CD8-positive, alpha-beta T cell (primary cell): ENCODE measurements at regions of chr18 and their contacts with region 1.

Region 1: DNA sequence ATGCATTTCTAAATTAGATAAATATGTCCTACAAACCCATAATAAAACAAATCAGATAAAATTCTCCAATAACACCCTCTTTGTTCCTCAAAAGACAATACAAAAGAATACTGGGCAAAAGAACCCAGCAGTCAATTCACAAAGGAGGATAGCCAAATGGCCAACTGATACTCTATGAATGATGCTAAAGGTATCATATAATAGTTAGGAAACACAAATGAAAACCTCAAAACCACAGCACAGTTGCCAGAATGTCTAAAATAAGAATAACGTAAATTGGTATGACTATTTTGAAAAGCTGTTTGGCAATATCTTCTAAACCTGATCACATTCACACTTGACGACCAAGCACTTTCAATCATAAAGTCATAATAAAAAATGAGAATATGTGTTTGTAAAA is 315.4 kb downstream of the CDH7 start:
- DNase-seq: no peak
- ATAC-seq: no peak
- H3K4me3 ChIP-seq: no peak overlapping the region
- H3K4me3 Mint-ChIP-seq: no peak overlapping the region
- H3K27ac ChIP-seq: no peak overlapping the region
- H3K27ac Mint-ChIP-seq: no peak overlapping the region
- H3K4me1 ChIP-seq: no peaks in the 10 kb centered on the region
- H3K4me1 Mint-ChIP-seq: no peaks in the 10 kb centered on the region
- H3K27me3 ChIP-seq: no peaks in the 10 kb centered on the region
- H3K27me3 Mint-ChIP-seq: no peaks in the 10 kb centered on the region
- CTCF ChIP-seq: no peak

Region 2: DNA sequence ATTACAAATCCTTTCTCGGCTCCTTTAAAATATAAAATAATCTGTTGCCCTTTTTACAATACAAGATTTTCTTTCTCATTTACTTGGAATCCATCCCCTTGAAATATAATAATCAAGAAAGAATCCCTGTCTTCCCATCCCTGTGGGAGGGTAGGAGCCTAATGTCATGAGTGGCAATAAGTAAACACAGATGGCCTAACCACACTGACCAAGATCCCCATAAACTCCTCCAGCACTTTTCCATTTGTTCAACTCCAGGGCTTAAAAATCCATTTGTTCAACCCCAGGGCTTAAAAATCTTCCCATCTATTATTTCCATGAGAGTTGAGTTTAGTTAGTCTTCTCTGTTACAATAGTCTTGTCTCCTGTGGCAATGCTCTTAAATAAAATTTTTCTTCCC is 17.8 kb before region 1 on chr18:
- CTCF ChIA-PET with region 1: no interaction called
- POLR2A ChIA-PET with region 1: no interaction called
- intact Hi-C with region 1: loop called in 1 of 2 experiments (anchors 2 kb)
- DNase-seq: no peak
- ATAC-seq: no peak
- H3K4me3 ChIP-seq: no peak overlapping the region
- H3K4me3 Mint-ChIP-seq: no peak overlapping the region
- H3K27ac ChIP-seq: no peak overlapping the region
- H3K27ac Mint-ChIP-seq: no peak overlapping the region
- H3K4me1 ChIP-seq: no peaks in the 10 kb centered on the region
- H3K4me1 Mint-ChIP-seq: no peaks in the 10 kb centered on the region
- H3K27me3 ChIP-seq: no peaks in the 10 kb centered on the region
- H3K27me3 Mint-ChIP-seq: no peaks in the 10 kb centered on the region
- CTCF ChIP-seq: no peak

Region 3: DNA sequence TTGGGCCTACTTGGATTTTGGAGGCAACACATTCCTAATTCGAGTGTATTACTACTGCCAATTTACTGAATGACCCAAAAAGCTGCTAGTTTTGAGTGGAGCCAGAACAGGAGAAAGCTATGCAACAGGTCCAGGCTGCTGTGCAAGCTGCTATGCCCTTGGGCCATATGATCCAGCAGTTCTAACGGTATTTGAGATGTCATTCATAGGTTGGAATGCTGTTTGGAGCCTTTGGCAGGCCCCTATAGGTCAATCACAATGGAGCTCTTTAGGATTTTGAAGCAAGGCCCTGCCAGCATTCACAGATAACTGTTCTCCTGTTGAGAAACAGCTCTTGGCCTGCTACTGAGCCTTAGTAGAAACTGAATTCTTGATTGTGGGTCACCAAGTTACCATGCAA is 169.0 kb after region 1 on chr18:
- CTCF ChIA-PET with region 1: no interaction called
- POLR2A ChIA-PET with region 1: no interaction called
- intact Hi-C with region 1: no loop called
- DNase-seq: no peak
- ATAC-seq: no peak
- H3K4me3 ChIP-seq: no peak overlapping the region
- H3K4me3 Mint-ChIP-seq: no peak overlapping the region
- H3K27ac ChIP-seq: no peak overlapping the region
- H3K27ac Mint-ChIP-seq: no peak overlapping the region
- H3K4me1 ChIP-seq: no peaks in the 10 kb centered on the region
- H3K4me1 Mint-ChIP-seq: no peaks in the 10 kb centered on the region
- H3K27me3 ChIP-seq: no peaks in the 10 kb centered on the region
- H3K27me3 Mint-ChIP-seq: no peaks in the 10 kb centered on the region
- CTCF ChIP-seq: no peak

Region 4: DNA sequence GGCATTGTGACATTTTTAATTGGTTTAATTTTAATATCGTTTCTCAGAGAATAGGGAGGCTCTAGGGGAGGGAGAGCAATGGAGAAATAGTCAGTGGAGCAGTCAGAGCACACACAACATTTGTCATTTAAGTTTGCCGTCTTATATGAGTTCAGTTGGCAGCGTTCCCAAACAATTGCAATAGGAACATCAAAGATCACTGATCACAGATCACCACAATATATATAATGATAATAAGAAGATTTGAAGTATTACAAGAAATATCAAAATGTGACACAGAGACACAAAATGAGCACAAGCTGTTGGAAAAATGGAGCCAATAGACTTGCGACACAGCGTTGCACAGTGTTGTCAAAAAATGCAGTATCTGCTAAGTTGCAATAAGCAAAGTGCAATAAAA is 233.9 kb after region 1 on chr18:
- CTCF ChIA-PET with region 1: no interaction called
- POLR2A ChIA-PET with region 1: no interaction called
- intact Hi-C with region 1: no loop called
- DNase-seq: no peak
- ATAC-seq: no peak
- H3K4me3 ChIP-seq: no peak overlapping the region
- H3K4me3 Mint-ChIP-seq: no peak overlapping the region
- H3K27ac ChIP-seq: no peak overlapping the region
- H3K27ac Mint-ChIP-seq: no peak overlapping the region
- H3K4me1 ChIP-seq: no peaks in the 10 kb centered on the region
- H3K4me1 Mint-ChIP-seq: no peaks in the 10 kb centered on the region
- H3K27me3 ChIP-seq: no peaks in the 10 kb centered on the region
- H3K27me3 Mint-ChIP-seq: no peaks in the 10 kb centered on the region
- CTCF ChIP-seq: no peak